Activated CD4-positive, alpha-beta memory T cell treated with anti-CD3 and anti-CD28 coated beads for 36 hours (primary cell): ENCODE measurements at regions of chr17 and their contacts with region 1.

Region 1: DNA sequence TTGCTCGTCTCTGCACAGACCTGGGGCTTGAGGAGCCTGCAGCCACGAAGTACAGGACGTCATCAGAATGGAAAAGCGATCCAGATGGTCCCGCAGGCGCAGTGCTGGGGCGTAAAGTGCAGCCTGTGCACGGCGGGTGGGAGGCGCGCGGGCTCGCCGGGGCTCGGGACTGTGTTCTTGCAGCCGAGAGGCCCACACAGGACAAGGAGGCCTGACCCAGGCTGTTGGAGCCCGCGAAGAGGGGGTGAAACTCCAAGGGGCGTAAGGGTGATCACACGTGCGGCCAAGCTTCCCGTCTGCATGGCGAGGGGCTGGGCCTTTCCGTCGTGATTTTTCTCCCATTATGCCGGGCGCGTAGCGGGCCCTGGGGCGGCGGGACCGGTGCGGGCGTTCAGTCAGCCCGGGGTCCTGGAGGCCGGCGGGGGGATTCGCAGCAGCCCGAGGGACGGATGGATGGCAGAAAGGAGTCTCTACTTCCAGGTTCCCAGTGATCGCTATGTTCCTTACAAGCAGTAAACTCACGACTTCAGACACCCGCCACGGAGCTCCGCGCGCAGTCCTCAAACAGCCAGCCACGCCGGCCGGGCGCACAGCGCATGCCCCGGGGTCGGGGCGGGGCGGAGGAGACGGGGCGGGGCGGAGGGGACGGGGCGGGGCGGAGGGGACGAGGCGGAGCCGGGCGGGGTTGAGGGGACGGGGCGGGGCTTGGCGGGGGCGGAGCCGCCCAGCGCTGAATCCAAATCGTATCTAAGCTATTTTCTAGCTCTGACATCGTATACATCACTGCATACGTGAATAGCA is 141.0 kb upstream of the KCNJ18 start:
- DNase-seq: peak; percentile 86
- H3K4me3 Mint-ChIP-seq: peak overlapping the region; percentile 88
- H3K27ac Mint-ChIP-seq: peak overlapping the region; percentile 66
- H3K4me1 Mint-ChIP-seq: peaks cover 29% of the 10 kb centered on the region
- H3K27me3 Mint-ChIP-seq: peaks cover 13% of the 10 kb centered on the region

Region 2: DNA sequence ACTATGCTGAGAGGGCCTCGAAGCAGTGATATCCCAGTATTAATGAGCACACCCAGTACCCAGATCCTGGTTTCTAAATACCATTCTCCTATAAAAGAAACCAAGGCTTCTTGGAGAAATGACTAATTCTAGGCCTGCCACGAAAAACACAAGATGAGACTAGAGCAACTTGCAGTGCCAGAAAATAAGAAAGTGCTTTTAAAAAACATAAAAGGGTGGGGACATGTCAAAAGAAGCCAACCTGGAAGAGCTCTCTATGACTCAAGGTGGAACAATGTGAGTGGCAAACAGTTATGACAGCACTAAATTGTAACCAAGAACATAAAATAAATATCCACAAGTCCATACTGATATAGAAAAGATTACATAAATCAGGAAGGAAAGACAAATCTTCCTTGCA is 12.1 kb before region 1 on chr17:
- CTCF ChIA-PET with region 1: interaction called, 4 read pairs
- POLR2A ChIA-PET with region 1: interaction called, 4 read pairs
- intact Hi-C with region 1: loop called (anchors 1 kb)
- DNase-seq: no peak
- H3K4me3 Mint-ChIP-seq: no peak overlapping the region
- H3K27ac Mint-ChIP-seq: no peak overlapping the region
- H3K4me1 Mint-ChIP-seq: peaks cover 22% of the 10 kb centered on the region
- H3K27me3 Mint-ChIP-seq: no peaks in the 10 kb centered on the region